Ascending aorta (tissue), 2 donors: ENCODE measurements at regions of chr6 and their contacts with region 1.

Region 1: GRCh38 chr6:46221222-46221793 is 50.5 kb upstream of the ENPP5 start:
- DNase-seq: no peak
- H3K4me3 ChIP-seq: no peak overlapping the region
- H3K27ac ChIP-seq: peak overlapping the region in 1 of 2 donors; percentile 97
- H3K4me1 ChIP-seq: peaks cover 9 to 36% of the 10 kb centered on the region in 2 donors
- H3K27me3 ChIP-seq: no peaks in the 10 kb centered on the region
- CTCF ChIP-seq: peak; percentile 70 to 80 (median 71)

Region 2: DNA sequence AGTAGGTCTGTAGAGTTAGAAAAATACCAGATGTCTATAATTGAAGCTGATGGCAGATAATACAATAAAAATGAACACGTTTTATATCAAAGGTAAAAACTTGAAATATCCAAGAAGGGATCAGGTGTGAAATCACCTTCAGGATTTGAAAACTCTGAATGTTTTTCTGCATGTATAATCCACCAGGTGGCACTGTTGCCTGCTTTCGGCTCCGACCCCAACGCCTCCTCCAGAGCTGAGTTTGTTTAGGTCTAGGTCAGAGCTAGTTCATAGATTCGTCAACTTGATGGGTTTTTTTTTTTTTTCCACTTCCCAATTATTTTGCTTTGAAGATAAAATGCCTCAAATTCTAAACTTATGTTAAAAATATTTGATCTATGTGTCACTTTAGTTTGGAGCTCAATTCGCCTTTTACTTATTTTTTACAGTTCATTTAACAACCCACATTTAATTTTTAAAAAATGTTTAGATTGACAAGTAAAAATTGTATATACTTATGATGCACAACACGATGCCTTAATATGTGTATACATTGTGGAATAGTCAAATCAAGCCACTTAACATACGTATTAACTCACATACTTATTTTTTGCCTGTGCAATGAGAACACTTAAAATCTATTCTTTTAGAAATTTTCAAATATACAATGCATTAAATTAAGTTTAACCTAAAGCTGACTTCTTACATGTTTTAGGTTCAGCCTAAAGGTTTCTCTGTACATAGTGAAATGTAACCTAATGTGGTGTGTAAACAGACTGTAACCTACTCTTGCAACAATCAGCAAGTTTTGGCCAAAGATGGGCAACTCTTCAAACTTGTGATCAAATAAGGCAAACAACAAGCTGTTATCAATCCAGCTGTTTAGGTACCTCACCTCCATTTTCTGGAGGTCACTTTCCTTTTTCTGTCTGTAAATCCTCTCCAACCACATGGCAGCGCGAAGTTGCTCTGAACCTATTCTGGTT is 130.9 kb before region 1 on chr6:
- intact Hi-C with region 1: loop called (anchors 5 kb)
- DNase-seq: peak in 1 of 2 donors; percentile 73
- H3K4me3 ChIP-seq: no peak overlapping the region
- H3K27ac ChIP-seq: no peak overlapping the region
- H3K4me1 ChIP-seq: no peaks in the 10 kb centered on the region
- H3K27me3 ChIP-seq: no peaks in the 10 kb centered on the region
- CTCF ChIP-seq: peak; percentile 58 to 80 (median 67)

Region 3: GRCh38 chr6:46325561-46326530 is 104.5 kb after region 1 on chr6:
- intact Hi-C with region 1: loop called (anchors 2 kb)
- DNase-seq: no peak
- H3K4me3 ChIP-seq: no peak overlapping the region
- H3K27ac ChIP-seq: peak overlapping the region in 1 of 2 donors; percentile 17
- H3K4me1 ChIP-seq: peaks cover 0 to 55% of the 10 kb centered on the region in 2 donors
- H3K27me3 ChIP-seq: no peaks in the 10 kb centered on the region
- CTCF ChIP-seq: no peak

Region 4: GRCh38 chr6:46491628-46492547 is 270.6 kb after region 1 on chr6:
- intact Hi-C with region 1: loop called (anchors 5 kb)
- DNase-seq: peak in 1 of 2 donors; percentile 83
- H3K4me3 ChIP-seq: peak overlapping the region; percentile 64 to 89
- H3K27ac ChIP-seq: peak overlapping the region; percentile 94 to 97
- H3K4me1 ChIP-seq: no peaks in the 10 kb centered on the region
- H3K27me3 ChIP-seq: no peaks in the 10 kb centered on the region
- CTCF ChIP-seq: peak; percentile 81 to 95 (median 83)

Region 5: GRCh38 chr6:46626228-46626909 is 405.1 kb after region 1 on chr6:
- intact Hi-C with region 1: loop called (anchors 2 kb)
- DNase-seq: no peak
- H3K4me3 ChIP-seq: peak overlapping the region; percentile 5 to 53
- H3K27ac ChIP-seq: no peak overlapping the region
- H3K4me1 ChIP-seq: no peaks in the 10 kb centered on the region
- H3K27me3 ChIP-seq: no peaks in the 10 kb centered on the region
- CTCF ChIP-seq: peak; percentile 62 to 74 (median 63)